Keratinocyte (primary cell): ENCODE measurements at regions of chr6 and their contacts with region 1.

Region 1: DNA sequence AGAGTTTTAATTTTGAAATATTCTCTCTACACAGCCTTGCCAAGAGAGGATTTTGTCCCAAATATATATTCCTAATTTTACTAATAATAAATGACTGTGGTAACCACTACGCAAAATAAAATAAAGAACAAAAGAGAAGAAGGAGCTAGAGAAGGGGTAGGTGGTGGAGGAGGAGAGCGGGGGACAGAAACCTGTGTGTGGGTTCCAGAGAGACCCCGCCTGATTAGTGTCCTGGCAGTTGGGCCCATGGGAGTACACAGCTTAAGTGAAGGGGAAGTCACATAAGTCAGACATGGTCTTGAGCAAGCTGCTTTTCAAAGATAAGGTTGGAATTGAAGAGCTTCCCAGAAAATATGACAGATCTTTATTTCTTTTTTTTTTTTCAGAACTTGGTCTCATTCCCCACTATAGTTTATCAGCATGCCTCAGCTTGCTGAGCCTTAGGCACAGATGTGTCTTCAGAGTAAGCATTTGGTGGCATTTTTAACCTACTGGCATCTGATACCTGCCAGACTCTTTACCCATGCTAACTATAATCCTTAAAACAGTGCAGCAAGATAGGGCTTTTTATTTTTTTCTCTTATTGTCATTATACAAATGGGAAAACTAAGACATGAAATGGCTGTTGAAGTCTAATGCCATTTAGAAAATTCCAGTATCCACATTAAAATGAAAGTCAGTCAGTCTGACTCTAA is 9.6 kb upstream of the RHAG start:
- DNase-seq: no peak
- H3K4me3 ChIP-seq: no peak overlapping the region
- H3K27ac ChIP-seq: no peak overlapping the region
- H3K4me1 ChIP-seq: no peaks in the 10 kb centered on the region
- H3K27me3 ChIP-seq: no peaks in the 10 kb centered on the region
- CTCF ChIP-seq: no peak

Region 2: DNA sequence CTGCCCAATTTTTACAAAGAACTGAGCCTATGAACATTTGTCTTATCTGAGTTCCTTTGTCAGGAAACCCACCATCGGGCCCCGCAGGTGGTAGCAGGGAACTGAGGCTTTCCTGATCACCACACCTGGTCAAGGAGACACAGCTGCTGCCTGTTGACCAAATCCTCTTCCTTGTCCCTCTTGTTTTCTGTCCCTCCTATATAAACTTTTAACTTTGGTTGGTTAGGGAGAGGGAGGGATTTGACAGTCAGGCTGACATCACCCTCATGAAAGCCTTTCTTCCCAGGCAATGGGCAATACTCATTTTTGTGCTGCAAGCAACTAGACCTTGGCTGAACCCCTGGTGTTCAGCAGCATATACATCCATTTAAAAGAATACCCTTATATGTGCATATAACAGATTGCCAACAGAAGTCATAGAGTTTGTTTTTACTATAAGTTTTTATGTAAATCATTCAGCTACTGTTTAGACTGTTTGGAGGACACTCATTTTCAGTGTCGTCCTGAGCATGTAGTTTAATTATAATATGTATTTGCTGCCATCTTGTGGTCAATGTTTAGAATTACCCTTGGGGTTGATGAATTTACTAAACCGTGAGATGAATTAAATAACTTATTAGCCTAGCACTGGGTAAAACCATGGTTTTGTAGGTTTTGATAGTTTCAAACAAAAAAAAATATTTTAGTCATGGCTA is 203.1 kb after region 1 on chr6:
- dilution Hi-C with region 1: loop called (anchors 25 kb)
- DNase-seq: no peak
- H3K4me3 ChIP-seq: no peak overlapping the region
- H3K27ac ChIP-seq: no peak overlapping the region
- H3K4me1 ChIP-seq: no peaks in the 10 kb centered on the region
- H3K27me3 ChIP-seq: no peaks in the 10 kb centered on the region
- CTCF ChIP-seq: peak in 1 of 3 experiments; percentile 40

Region 3: GRCh38 chr6:50062051-50062450 is 415.8 kb after region 1 on chr6:
- dilution Hi-C with region 1: loop called (anchors 25 kb)
- DNase-seq: no peak
- H3K4me3 ChIP-seq: no peak overlapping the region
- H3K27ac ChIP-seq: no peak overlapping the region
- H3K4me1 ChIP-seq: no peaks in the 10 kb centered on the region
- H3K27me3 ChIP-seq: no peaks in the 10 kb centered on the region
- CTCF ChIP-seq: peak; percentile 49 to 59 (median 55)